ENCODE measurements at regions of chr14 and their contacts with region 1.

Region 1: GRCh38 chr14:63174760-63175211 is 29.5 kb upstream of the RHOJ start:
- DNase-seq: no peak
- ATAC-seq: peak; percentile 86

Region 2: DNA sequence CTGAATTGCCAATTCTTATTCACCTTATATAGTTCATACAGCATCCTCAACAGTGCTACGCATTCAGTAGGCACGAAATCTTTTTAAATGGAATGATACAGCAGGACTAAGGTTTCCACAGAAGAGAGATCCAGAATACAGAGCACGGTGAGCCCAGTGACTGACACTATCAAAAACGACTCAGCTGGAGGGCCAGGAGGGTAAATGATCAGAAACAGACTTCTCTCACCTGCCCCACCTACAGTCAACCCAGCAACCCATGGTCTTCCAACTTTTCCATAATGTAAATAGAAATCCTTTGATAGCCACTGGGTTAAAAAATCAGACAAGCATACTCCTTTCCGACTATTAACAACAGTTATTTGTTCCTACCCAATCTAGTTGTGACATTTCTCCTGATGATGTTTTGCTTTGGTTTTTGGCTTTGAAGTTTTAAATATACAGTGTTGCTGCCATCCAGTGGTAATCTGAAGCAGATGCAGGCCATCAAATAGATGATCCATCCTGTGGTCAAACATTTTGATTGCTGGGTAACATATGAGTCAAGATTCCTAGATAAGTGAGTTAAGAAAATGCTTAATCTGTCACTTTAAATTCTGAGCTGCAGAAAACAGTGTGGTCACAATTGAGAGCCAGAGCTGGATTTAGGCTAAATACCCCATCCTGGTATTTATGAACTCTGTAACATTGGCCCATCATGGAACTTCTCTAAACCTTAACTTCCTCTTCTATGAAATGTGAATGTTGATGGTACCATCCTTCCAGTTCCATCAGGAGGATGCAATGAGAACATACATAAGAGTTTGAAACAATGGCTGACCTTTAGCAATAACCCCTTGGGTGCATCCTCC is 101.9 kb after region 1 on chr14:
- intact Hi-C with region 1: loop called (anchors 5 kb)
- DNase-seq: no peak
- ATAC-seq: peak; percentile 57

Region 3: GRCh38 chr14:64880221-64881121 is 1705.7 kb after region 1 on chr14:
- intact Hi-C with region 1: no loop called
- DNase-seq: peak; percentile 64
- ATAC-seq: peak; percentile 79

Measured in sciatic nerve (tissue), 2 donors.